Heart right ventricle (tissue), 16 donors: ENCODE measurements at regions of chrX and their contacts with region 1.

Region 1: DNA sequence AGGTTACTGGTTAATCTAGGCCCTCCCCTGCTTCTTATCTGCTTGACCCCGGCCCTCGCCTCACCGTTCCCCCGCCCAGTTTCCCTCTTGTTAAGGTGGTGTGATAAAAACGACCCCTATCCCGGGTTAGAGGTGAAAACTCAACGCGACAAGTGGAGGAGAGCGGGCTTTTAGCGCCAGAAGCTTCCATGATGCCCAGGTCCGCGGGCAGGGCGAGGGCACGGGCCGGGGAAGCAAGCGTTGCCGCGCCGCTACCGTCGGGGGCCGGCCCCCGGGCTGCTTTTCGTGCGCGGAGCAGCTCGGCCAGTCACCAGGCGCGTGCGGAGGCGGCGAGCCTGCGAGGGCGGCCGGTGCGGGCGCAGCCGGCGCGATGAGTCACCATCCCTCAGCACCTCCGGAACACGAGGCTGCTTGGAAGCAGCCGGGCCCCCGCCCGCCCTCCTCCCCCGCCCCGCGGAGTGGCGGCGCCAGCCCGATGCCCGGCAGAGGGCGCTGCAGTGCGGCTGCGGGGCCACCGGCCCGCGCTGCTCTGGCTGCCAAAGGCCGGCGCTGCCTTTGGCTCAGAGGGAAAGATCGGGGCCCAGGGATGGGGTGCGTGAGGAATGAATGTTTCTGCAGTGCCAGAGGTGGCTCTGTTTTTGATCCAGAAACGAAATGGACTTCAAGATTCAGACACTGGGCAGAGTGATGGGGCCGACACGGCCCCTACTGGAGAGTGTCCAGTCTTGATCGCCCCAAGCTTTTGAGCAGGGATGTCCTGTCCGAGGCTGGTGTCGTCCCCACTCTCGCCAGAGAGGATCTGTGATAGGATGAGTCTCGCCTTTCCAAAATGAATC is 107.8 kb downstream of the NHSL2 start:
- DNase-seq: peak; percentile 82 to 86
- ATAC-seq: peak; percentile 93 to 99 (median 98)
- H3K4me3 ChIP-seq: peak overlapping the region in 5 of 10 donors; percentile 20 to 45 (median 28)
- H3K27ac ChIP-seq: peak overlapping the region in 7 of 10 donors; percentile 34 to 66 (median 53)
- H3K4me1 ChIP-seq: peaks cover 0 to 24% (median 6%) of the 10 kb centered on the region in 9 donors
- H3K27me3 ChIP-seq: peaks cover 0 to 83% (median 0%) of the 10 kb centered on the region in 7 donors
- CTCF ChIP-seq: peak; percentile 61 to 89 (median 77)

Region 2: DNA sequence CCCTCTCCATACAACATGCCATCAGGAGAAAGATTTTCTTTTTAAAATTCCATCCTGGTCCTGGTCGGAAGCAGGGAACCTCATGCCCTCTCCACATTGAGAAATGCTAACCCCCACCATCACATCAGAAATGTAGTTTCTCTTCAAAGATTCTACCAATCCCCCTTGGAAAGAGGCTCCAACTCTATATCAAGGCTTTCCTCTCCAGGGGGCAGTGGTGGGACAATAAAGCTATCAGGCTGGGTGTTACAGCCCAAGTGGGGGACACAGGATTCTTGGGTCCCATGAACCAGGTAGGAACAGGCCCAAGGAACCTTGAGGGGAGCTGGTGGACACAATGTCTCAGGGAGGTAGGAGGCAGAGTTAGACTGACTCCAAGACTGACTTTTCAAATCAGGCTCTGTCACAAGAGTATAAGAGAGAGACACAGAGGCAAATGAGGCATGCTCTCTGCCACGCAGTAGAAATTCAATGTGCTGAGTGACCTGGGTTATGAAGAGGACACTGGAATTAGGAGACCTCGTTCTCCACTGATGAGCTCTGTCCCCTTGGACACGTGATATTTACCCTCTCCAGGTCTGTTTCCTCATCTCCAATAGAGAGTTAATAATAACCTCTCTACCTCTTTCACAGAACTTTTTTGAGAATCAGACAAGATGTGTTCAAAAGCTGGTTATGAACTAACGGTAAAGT is 791.0 kb before region 1 on chrX:
- intact Hi-C with region 1: no loop called
- DNase-seq: no peak
- ATAC-seq: no peak
- H3K4me3 ChIP-seq: no peak overlapping the region
- H3K27ac ChIP-seq: no peak overlapping the region
- H3K4me1 ChIP-seq: no peaks in the 10 kb centered on the region
- H3K27me3 ChIP-seq: peaks cover 0 to 24% (median 0%) of the 10 kb centered on the region in 7 donors
- CTCF ChIP-seq: no peak

Region 3: DNA sequence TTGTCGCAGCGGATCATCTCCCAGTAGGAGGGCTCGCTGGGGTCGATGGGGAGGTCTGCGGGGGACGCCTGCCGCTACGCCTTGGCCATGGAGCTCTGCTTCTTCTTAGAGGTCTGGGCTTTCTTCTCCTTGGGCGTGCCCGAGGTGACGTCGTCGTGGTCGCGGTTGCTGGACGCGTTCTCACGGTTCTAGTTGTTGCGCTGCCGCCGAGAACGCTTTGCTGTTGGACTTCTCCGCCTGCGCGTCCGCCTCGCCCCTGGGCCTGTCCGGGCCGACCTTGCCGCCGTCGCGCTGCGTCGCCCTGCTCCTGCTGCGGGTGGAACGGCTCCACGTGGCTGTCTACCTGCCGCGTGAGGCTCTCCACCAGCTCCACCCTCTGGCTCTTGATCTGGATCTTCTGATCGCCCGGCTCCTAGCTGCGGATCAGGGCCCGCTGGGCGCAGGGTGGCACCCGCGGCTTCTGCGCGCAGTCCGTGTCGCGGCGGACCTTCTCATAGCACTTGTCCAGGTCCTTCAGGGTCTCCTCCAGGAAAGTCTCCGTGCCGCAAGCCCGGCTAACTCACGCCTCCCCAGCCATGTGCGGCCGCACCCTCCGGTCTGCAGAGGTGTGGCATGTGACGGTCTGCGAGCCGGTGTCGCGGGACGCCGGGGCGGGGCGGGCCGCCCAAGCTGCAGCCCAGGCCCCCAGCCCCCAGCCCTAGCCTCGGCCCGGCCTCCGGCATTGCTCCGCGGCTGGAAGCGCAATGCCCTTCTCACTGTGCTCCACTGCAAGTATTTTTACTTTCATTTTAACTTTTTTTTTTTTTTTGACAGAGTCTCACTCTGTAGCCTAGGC is 526.0 kb before region 1 on chrX:
- intact Hi-C with region 1: no loop called
- DNase-seq: peak; percentile 24 to 53
- ATAC-seq: peak in 7 of 8 donors; percentile 69 to 87 (median 83)
- H3K4me3 ChIP-seq: peak overlapping the region in 9 of 10 donors; percentile 29 to 74 (median 65)
- H3K27ac ChIP-seq: peak overlapping the region in 4 of 10 donors; percentile 10 to 63 (median 31)
- H3K4me1 ChIP-seq: no peaks in the 10 kb centered on the region
- H3K27me3 ChIP-seq: no peaks in the 10 kb centered on the region
- CTCF ChIP-seq: no peak

Region 4: DNA sequence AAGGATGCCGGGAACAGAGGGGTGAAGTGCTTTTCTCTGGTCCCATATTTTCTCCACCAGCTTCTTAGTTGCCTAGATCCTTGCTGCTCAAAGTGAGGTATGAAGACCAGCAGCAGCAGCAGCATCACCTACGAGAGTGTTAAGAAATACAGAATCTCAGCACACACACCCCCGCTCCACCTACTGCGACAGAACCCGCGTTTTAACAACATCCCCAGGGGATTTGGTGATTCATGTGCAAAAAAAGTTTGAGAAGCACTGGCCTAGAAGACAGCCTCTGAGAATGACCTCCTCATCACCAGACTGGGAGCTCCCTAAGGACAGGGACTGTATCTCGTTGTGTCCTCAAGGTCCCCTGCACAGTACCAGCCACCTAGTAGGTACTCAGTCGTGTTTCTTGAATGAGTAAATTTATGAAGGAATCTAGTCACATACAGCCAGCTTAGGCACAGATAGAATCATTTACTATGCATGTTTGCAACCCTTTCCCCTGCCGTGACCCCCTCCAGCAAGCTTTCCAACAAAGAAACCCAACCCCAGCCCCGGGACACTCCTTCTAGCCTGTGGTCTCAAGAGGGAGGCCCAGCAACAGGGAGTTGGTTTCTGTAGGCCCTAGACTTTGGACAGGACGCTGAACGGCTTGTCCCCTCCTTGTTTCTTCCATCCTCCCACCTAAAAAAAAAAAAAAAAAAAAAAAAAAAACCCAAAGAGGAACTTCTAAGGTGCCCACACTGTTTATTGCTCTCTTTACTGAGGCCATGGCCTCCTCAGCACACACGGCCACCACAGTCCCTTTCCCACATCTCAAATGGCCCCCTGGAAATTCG is 91.8 kb after region 1 on chrX:
- intact Hi-C with region 1: no loop called
- DNase-seq: no peak
- ATAC-seq: no peak
- H3K4me3 ChIP-seq: no peak overlapping the region
- H3K27ac ChIP-seq: no peak overlapping the region
- H3K4me1 ChIP-seq: peaks cover 0 to 22% (median 5%) of the 10 kb centered on the region in 9 donors
- H3K27me3 ChIP-seq: peaks cover 0 to 70% (median 0%) of the 10 kb centered on the region in 7 donors
- CTCF ChIP-seq: no peak

Region 5: GRCh38 chrX:72121383-72121782 is 102.9 kb after region 1 on chrX:
- intact Hi-C with region 1: loop called in 9 of 10 experiments (anchors 1 to 5 kb)
- DNase-seq: peak; percentile 52 to 76
- ATAC-seq: peak; percentile 62 to 85 (median 80)
- H3K4me3 ChIP-seq: peak overlapping the region in 1 of 10 donors; percentile 4
- H3K27ac ChIP-seq: peak overlapping the region; percentile 16 to 87 (median 62)
- H3K4me1 ChIP-seq: peaks cover 5 to 61% (median 57%) of the 10 kb centered on the region in 9 donors
- H3K27me3 ChIP-seq: peaks cover 0 to 46% (median 0%) of the 10 kb centered on the region in 7 donors
- CTCF ChIP-seq: no peak